Posterior vena cava (tissue), 2 donors: ENCODE measurements at regions of chr16 and their contacts with region 1.

Region 1: GRCh38 chr16:80924372-80924978 is 82.2 kb downstream of the CMC2 start:
- DNase-seq: no peak

Region 2: DNA sequence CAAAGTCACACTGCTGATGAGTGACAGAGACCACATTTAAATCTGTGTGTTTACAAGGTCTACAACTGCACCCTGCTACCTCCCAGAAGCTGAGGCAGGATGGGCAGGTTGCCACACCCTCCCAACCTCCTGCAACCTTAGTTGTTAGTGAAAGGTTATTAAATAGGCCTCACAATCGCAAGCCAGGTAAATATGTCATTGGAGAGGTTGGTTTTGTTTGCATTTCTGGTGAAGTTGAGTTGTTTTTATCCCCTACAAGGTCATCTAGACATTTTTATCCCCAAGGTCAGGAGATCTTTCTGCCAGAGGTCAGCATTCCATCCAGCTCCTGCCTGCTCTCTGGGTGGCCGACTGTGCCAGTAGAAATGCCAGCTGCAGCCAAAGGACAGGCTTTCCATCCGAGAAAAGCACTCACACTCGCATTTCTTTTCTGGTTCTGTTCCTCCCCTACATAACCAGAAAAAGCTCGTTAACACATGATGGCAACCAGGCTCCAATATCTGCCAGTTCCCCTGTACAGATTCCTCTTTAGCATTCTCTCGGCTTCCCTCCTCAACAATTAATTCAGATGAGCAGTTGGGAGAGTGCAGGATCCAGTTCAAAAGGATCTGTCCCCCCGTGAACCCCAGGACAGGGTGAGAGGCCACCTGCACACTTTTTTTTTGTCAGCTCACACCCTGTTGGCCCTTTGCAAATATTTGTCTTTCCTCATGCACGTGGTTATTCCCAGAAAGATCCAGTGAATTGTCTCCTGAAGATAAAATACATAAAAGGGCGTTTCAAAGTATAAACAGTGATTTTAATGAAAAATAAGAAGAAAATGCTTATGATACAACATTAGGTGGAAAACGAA is 1886.7 kb before region 1 on chr16:
- intact Hi-C with region 1: loop called in 1 of 2 experiments (anchors 5 kb)
- DNase-seq: no peak